HAP-1 (cell line): ENCODE measurements at regions of chr10 and their contacts with region 1.

Region 1: DNA sequence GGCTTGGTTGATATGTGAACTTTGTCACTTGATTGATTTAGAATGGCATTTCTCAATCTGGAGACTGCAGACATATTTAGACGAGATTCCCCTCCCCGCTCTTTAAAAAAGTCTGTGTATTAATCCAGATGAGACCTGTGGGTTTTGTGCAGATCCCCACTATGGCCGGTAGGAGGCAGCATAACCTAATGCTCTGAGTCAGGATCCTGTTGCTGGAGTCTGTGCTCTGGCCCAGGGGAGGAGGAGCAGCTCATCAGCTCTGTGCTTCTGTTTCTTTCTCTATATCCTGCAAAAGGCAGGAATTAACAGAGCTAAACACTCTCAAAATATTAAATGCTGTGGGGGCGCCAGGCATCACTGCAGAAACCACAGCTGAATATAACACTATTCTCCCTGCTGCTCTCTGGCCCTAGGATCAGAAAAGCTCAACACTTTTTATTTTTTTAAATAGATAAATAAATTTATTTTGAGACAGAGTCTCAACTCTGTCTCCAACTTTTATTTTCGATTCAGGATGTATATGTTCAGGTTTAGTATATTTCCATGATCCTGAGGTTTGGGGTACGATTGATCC is 23.9 kb upstream of the SEPHS1 start:
- DNase-seq: peak; percentile 79 to 84
- H3K4me3 ChIP-seq: no peak overlapping the region
- H3K4me1 ChIP-seq: no peaks in the 10 kb centered on the region; the same call in 1 of the 2 replicates
- H3K27me3 ChIP-seq: no peaks in the 10 kb centered on the region

Region 2: GRCh38 chr10:12960334-12960898 is 411.6 kb before region 1 on chr10:
- in situ Hi-C with region 1: no loop called
- DNase-seq: no peak
- H3K4me3 ChIP-seq: no peak overlapping the region
- H3K4me1 ChIP-seq: no peaks in the 10 kb centered on the region
- H3K27me3 ChIP-seq: no peaks in the 10 kb centered on the region

Region 3: DNA sequence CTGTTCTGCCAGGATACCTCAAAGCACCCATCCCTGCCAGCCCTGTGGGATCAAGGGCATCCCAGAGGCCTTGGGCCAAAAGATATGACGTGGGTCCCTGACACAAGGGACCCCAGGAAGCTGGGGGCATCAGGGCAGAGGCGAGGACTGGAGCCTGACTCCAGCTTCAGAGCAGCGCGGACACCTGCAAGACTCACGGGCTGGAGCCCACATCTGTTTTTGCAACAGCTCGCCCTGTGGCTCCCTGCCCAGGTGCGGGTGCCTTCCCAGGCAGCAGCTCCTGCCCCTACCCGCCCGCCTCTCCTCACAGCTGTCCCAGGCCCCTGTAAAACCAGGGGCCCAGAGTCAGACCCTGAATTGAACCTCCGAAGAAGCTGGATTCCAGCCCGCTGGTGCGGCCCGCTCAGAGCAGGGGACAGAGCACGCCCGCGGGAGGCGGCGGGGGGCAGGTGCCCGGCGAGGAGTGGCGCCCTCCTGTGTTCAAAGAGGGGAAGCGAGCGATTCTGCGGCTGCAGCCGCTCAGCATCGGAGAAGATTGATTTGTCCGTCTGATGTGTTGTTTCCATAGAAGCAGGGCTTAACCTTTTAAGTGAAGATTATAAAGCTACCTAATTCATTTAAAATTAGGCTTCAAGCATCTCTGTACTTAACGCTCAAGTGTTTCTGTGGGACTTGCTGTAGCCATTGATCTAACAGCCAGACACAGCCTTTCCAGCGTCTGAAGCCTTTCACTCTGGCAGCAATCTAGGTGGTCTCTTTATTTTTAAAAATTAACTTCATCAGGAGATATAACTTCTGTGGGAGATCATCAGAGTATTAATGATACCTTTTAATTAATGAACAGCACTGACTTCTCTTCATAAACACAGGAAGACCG is 68.4 kb after region 1 on chr10:
- in situ Hi-C with region 1: loop called (anchors 5 kb)
- DNase-seq: peak; percentile 51 to 83
- H3K4me3 ChIP-seq: peak overlapping the region; percentile 16; the same call in 1 of the 2 replicates
- H3K4me1 ChIP-seq: peaks cover 11% of the 10 kb centered on the region
- H3K27me3 ChIP-seq: no peaks in the 10 kb centered on the region

Region 4: DNA sequence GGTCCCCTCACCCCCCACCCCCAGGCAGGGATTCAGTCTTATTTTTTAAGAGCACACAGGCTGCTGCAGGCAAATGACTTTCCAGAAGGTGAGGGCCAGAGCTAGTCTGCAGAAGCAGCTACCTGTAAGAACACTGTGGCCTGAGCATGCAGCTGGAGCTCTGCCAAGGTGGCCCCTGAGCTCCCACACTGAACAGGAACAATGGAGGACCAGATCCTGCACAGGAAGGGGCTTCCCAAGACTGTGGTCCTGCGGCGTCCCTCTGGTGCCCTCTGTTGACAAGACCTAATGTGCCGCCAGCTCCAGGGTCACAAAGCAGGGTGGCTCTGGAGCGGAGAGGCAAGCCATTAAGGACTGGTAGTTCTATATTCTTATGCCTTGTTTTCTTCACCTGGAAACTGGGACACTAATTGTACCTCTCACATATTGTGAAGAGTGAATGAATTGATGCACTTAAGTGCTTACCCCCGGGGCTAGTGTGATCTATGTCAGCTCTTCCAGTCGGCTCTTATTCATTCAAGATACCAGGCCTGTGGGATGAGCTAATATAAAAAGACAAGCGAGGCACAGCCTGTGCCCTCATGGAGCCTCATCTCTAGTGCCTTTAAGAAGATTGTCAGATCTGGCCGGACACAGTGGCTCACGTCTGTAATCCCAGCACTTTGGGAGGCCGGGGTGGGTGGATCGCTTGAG is 164.8 kb after region 1 on chr10:
- in situ Hi-C with region 1: loop called (anchors 5 kb)
- DNase-seq: peak; percentile 75 to 86
- H3K4me3 ChIP-seq: no peak overlapping the region
- H3K4me1 ChIP-seq: no peaks in the 10 kb centered on the region; the same call in 1 of the 2 replicates
- H3K27me3 ChIP-seq: peaks cover 29% of the 10 kb centered on the region

Region 5: DNA sequence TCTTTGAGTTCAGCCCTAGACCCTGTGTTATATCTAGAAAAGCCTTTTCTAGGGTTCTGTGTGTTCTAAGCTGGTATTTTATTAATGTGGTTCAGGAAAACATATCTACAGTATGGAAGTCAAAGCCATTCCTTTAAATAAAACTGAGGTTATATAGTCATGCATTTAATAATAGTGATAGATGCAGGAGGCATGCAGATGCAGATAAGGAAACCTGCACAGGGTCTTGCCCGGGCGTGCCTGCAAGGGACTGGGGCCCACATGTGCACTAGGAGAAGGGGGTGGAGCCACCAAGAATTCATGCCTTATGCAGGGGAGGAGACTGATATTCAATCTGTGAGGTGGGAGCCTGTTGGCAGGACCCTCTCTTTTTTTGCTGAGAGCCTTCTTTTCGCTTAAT is 386.3 kb after region 1 on chr10:
- in situ Hi-C with region 1: loop called (anchors 25 kb)
- DNase-seq: peak; percentile 3 to 76
- H3K4me3 ChIP-seq: no peak overlapping the region
- H3K4me1 ChIP-seq: no peaks in the 10 kb centered on the region
- H3K27me3 ChIP-seq: no peaks in the 10 kb centered on the region